Cardiac septum (tissue), 1 donor: ENCODE measurements at regions of chr2 and their contacts with region 1.

Region 1: DNA sequence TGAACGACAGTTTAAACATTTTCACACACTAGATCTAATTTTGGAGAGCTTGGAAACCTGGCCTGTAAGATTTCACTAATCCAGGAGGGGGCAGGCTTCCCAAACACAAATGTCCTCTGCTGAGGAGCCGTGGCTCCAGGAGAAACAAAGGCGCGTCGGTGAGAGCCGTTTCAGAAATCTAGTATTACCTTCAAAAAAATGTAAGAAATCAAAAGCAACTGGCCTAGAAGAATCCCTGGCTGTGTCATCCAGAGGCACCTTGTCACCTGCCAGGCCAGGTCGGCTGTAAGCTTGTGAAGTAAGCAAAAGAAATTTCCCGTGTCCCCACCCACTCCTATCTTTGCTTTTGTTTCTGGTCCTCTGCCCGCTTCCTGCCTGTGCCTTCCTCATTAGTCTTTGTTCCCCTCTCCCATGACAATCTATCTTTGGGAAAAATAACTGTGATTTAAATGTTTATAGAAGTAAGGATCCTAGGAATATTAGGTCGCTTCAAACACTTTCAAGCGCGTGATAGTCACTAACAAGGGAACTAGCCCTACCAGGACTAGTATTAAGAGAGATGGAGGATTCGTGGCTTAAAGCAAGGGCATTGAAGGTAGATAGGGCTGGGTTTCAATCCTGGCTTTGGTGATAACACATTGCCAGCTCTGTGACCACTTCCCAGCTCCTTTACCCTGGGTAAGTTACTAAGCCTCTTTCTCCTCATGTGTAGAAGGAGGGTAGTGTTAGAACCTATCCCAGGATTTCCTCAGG is 99.5 kb upstream of the STK39 start:
- DNase-seq: no peak

Region 2: DNA sequence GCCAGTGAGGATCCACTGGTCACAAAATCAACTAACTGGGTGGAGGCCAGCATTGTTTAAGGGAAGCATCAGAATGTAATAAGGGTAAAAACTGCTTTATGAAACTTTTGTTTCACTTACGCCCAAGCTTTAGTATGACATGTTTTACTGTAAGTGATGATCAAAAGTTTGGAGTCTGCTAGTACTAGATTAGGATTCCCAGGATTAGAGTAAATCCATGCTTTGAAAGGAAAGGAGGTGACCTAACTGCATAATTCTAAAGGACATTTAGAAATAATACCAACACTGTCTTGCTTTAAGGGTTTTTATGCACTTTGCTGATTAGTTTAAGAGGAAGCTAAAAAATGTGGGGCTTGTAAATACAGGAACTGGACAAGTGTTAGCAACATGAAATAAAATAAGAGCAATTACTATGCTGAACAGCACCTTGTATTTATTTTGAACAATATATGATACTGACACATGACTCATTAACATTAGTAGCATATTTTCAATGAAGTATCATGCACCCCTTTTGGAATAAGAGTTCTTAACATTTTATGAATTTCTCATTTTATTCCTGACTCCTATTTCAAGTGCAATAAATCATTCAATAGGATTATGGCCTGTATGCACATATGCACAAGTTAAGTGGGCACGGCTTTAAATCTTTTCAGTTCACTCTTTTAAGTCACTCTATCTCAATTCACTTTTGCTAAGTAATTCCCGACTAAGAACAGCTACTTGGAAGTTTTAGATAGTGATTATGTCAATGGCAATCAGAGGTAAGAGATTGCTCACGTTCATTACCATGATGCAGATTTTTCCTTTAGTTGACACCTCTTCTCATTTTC is 162.0 kb before region 1 on chr2:
- intact Hi-C with region 1: no loop called
- DNase-seq: no peak

Region 3: DNA sequence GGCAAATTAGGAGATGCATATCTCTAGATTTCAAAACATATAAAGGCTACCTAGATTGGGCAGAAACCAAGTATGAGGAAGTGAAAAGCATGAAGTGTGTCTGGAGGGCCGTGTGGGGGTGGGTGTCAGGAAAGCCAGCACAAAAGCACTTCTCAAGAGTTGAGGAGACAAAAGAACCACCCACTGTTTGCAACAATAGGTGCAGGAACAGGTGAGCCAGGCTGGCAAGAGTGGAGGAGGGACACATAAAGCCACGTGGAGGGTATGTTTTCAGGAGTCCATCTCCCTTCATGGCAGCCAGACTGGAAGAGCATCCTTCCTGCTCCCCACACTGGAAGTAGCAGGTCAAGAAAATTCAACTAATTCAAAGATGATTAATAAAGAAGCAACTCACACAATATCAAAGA is 205.6 kb after region 1 on chr2:
- intact Hi-C with region 1: no loop called
- DNase-seq: no peak

Region 4: DNA sequence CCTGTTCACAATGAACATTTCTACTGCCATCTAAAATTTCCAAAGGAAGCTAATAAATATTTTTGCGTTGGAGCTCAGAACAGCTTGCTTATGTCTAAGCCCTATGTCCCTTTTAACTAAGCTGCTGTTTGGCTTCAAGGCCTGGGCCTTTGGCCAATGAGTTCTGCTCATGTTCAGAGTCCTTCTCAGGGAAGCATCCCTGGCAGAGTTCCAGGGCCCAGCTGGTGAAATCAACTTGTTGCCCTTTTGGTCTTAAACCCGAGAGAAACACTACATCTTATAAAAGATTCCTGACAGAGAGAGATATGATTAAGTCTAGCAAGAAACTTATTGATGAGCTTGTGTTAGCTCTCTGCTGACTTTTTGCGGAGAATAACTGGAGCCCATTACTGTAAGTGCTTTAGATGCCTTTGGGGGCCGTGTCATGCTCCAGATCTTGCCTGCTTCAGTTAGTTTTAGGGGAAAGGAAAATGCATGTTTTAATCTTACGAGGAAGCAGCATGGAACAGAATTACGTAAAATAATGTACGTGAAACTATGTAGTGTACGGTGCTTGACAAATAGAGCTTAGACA is 353.0 kb after region 1 on chr2:
- intact Hi-C with region 1: loop called (anchors 5 kb)
- DNase-seq: peak; percentile 86

Region 5: DNA sequence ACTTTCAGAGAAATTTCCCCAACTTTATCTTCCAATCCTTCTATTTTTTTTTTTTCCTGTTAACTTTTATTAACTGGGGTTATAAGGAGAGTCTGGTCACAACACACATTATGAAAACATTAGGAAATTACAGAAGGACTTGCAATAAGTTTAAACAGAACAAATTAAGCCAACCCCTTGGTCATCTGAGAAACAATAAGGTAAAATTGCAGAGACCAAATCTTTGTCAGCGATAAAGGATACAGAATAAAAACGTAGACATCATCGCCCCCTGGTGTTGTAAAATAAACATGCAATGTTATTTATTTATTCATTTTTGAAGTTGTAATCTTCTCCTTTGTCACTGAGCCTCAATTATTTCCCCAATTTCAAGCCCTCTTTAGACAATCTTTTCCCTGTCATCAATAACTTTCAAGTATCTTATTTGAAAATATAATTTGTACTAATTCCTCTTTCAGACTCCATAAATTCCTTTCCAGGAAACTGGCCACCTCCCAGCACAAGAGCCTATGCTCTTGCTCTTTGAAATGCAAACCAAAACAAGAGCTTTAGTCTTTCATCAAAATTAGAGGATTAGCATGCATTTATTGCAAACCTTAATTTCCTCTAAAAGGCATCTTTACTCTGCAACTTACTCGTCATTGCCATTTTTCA is 573.7 kb after region 1 on chr2:
- intact Hi-C with region 1: loop called (anchors 2 kb)
- DNase-seq: no peak